ENCODE measurements at regions of chr9 and their contacts with region 1.

Region 1: GRCh38 chr9:6055213-6055612 is 39.8 kb upstream of the RANBP6 start:
- DNase-seq: peak in 2 of 4 donors; percentile 38 to 71
- ATAC-seq: peak; percentile 99
- H3K4me3 ChIP-seq: no peak overlapping the region
- H3K27ac ChIP-seq: no peak overlapping the region
- H3K4me1 ChIP-seq: peaks cover 0 to 9% of the 10 kb centered on the region in 2 donors
- H3K27me3 ChIP-seq: no peaks in the 10 kb centered on the region
- CTCF ChIP-seq: peak; percentile 43 to 52

Region 2: DNA sequence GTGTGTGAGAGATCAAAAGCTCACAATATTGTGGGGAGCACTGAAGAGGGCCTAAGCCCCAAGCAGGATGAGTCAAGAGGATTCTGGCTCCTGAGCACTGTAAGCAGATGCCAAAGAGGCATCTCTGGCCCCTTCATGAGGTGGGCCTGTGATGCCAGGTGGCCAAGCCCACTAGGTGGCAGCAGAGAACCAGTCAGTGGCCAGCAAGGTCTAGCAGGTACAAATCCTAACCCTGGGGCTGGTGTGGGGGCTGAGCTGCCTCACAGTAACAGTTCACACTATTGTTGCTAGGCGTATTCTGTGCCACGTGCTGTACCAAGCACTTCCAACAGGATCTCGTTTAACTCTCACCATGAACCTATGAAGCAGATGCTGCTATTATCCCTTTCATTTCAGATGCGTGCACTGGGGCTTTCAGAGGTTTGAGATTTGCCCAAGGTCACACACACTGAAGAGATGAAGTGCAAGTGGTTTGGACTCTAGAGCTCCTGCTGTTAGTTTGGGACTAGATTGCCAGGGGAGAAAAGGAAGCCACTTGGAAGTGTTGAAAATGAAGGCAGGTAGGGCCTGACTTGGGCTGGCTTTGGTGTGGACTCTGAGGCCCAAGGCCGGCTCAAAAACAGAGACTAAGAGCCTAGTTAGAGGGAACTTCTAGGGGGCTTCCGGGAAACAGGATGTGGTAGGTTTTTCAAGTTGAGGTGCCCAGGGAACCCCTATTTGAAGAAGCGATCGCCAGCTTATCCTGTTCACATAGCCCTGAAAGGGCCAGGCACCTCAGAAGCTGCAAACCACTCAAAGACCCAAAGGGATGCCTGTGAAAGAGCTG is 168.9 kb before region 1 on chr9:
- intact Hi-C with region 1: loop called in 1 of 2 experiments (anchors 10 kb)
- DNase-seq: peak; percentile 41 to 84 (median 68)
- ATAC-seq: peak; percentile 96
- H3K4me3 ChIP-seq: no peak overlapping the region
- H3K27ac ChIP-seq: no peak overlapping the region
- H3K4me1 ChIP-seq: no peaks in the 10 kb centered on the region
- H3K27me3 ChIP-seq: no peaks in the 10 kb centered on the region
- CTCF ChIP-seq: peak; percentile 86 to 88

Region 3: GRCh38 chr9:5931657-5932056 is 123.6 kb before region 1 on chr9:
- intact Hi-C with region 1: no loop called
- DNase-seq: no peak
- ATAC-seq: no peak
- H3K4me3 ChIP-seq: no peak overlapping the region
- H3K27ac ChIP-seq: no peak overlapping the region
- H3K4me1 ChIP-seq: no peaks in the 10 kb centered on the region
- H3K27me3 ChIP-seq: no peaks in the 10 kb centered on the region
- CTCF ChIP-seq: no peak

Region 4: GRCh38 chr9:6123416-6123815 is 68.2 kb after region 1 on chr9:
- intact Hi-C with region 1: no loop called
- DNase-seq: no peak
- ATAC-seq: no peak
- H3K4me3 ChIP-seq: no peak overlapping the region
- H3K27ac ChIP-seq: no peak overlapping the region
- H3K4me1 ChIP-seq: no peaks in the 10 kb centered on the region
- H3K27me3 ChIP-seq: peaks cover 0 to 3% of the 10 kb centered on the region in 2 donors
- CTCF ChIP-seq: no peak

Region 5: DNA sequence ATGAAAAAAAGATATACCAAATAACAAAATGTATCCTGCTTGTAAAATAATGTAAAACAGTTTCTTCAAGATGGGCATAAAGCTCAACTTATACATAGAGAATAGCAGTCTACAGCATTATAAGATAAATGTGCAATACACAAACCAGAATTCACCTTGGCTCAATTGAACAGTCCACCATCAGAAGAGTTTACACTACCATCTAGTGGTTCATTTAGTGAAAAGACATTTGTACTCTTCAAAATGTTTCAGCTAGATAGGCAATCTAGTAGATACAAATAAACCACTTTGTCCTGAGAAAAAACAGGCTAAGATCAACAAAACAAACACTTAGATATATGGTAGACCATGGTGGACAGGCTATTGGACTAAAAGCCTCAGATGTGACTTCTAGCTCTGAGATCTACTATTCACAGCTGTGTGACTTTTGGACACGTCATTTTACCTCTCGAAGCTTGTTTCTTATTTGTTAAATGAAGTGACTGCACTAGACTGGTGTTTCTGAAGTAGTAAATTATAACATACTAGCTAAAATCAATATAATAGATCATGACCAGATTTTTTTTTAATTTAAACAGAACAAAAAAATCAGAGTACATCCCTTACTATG is 250.8 kb after region 1 on chr9:
- intact Hi-C with region 1: loop called in 1 of 2 experiments (anchors 10 kb)
- DNase-seq: peak in 2 of 4 donors; percentile 11 to 33
- ATAC-seq: peak; percentile 91
- H3K4me3 ChIP-seq: no peak overlapping the region
- H3K27ac ChIP-seq: no peak overlapping the region
- H3K4me1 ChIP-seq: no peaks in the 10 kb centered on the region
- H3K27me3 ChIP-seq: no peaks in the 10 kb centered on the region
- CTCF ChIP-seq: peak; percentile 28 to 53

Measured in left lung (tissue), 14 donors.